CD14-positive monocyte (primary cell): ENCODE measurements at regions of chr18 and their contacts with region 1.

Region 1: DNA sequence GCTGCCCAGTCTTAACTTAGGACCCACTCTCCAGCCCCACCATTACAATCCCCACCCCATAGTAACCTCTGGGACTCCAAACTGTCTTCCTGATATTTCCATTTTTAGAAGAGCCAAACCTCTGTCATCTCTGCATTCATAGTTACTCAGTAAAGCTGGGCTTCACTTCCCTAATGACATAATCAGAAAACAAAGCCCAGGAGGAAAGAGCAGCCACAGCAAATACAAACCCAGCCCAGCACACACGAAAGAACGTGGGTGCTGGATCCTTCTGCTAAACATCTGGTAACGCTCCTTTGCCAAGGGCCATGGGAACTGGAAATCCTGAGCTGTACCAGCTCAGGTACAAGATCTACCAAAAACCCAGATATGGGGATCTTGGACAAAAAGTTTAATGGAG is 36.8 kb upstream of the RIOK3 start:
- DNase-seq: peak; percentile 12 to 35 (median 26)
- H3K4me3 ChIP-seq: peak overlapping the region in 1 of 3 experiments; percentile 17
- H3K4me3 Mint-ChIP-seq: peak overlapping the region in 1 of 2 donors; percentile 56
- H3K27ac ChIP-seq: peak overlapping the region in 1 of 2 donors; percentile 52
- H3K27ac Mint-ChIP-seq: peak overlapping the region in 6 of 7 donors; percentile 27 to 88 (median 78)
- H3K4me1 ChIP-seq: peaks cover 16 to 20% of the 10 kb centered on the region in 2 donors
- H3K4me1 Mint-ChIP-seq: peaks cover 20% of the 10 kb centered on the region
- H3K27me3 ChIP-seq: no peaks in the 10 kb centered on the region
- H3K27me3 Mint-ChIP-seq: no peaks in the 10 kb centered on the region
- CTCF ChIP-seq: no peak

Region 2: DNA sequence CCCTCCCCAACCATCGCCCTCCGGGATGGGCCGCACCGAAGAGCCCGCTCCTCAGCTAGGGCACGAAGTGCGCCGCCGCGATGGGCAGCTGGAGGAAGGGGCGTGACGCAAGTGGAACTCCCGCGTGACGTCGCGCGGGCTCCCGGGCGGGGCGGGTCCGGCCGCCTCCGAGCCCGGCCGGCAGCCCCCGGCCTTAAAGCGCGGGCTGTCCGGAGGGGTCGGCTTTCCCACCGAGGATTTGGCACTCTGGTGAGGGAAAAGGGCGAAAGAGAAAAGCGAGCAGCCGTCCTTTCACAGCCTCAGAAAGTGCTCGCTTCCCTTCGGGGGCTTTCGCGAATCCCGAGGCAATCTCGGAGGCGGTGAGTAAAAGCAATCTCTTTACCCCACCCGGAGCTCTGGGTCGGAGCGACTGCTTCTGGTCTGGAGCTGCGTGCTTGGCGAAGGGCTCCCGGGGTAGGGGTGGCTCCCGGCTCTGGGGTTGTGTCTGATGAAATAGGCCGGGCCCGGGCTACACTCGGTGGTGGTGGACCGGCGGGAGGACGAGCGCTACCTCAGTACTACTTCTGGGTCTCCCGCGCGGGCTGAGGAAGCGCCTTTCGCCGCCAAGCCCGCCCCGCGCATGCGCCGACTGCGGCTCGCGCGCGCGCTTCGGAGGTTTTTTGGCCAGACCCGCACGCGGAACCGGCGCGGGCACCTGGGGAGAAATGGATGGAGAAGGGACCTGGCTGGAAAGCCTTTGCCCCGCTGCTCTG is 482.9 kb before region 1 on chr18 and contains the start of gene RBBP8:
- intact Hi-C with region 1: loop called in 1 of 2 experiments (anchors 10 kb)
- DNase-seq: peak; percentile 74 to 87 (median 79)
- H3K4me3 ChIP-seq: peak within 1 kb of the TSS; percentile 77 to 93 (median 90)
- H3K4me3 Mint-ChIP-seq: peak within 1 kb of the TSS; percentile 92 to 95
- H3K27ac ChIP-seq: peak within 1 kb of the TSS; percentile 96
- H3K27ac Mint-ChIP-seq: peak within 1 kb of the TSS; percentile 93 to 99 (median 98)
- H3K4me1 ChIP-seq: peaks cover 4 to 16% of the 10 kb centered on the region in 2 donors
- H3K4me1 Mint-ChIP-seq: peaks cover 15% of the 10 kb centered on the region
- H3K27me3 ChIP-seq: no peaks in the 10 kb centered on the region
- H3K27me3 Mint-ChIP-seq: peaks cover 0 to 5% (median 0%) of the 10 kb centered on the region in 3 donors
- CTCF ChIP-seq: no peak
- polyA plus RNA-seq, gene RBBP8: 5.8 to 9.6 (median 7.8) TPM

Region 3: DNA sequence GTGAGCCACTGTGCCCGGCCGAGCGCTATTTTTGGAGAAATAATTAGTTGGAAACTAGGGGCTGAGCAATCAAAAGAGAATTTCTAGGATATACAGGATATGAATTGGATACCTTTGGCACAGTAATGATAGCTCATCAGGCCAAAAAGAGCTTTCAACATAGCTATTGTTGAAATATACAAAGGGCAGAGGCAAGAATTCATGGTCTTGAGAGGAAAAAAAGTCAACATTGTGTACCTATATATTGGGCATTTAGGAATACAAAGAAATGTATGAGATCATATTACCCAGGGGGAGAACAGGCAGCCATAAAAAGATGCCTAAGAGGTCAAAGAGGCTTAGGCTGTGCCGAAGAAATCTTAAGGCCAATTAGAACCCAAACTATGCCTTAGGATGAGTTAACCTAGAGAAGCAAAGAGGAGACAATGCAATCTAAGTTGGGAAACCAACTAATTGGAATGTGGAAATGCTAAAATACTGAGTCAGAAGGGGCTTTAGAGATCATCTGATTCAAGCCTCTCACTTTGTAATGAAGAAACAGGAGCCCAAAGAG is 384.2 kb before region 1 on chr18:
- intact Hi-C with region 1: loop called (anchors 2 to 5 kb)
- DNase-seq: no peak
- H3K4me3 ChIP-seq: no peak overlapping the region
- H3K4me3 Mint-ChIP-seq: no peak overlapping the region
- H3K27ac ChIP-seq: no peak overlapping the region
- H3K27ac Mint-ChIP-seq: no peak overlapping the region
- H3K4me1 ChIP-seq: no peaks in the 10 kb centered on the region
- H3K4me1 Mint-ChIP-seq: peaks cover 1% of the 10 kb centered on the region
- H3K27me3 ChIP-seq: no peaks in the 10 kb centered on the region
- H3K27me3 Mint-ChIP-seq: no peaks in the 10 kb centered on the region
- CTCF ChIP-seq: no peak